Esophagus squamous epithelium (tissue), 5 donors: ENCODE measurements at regions of chr22 and their contacts with region 1.

Region 1: DNA sequence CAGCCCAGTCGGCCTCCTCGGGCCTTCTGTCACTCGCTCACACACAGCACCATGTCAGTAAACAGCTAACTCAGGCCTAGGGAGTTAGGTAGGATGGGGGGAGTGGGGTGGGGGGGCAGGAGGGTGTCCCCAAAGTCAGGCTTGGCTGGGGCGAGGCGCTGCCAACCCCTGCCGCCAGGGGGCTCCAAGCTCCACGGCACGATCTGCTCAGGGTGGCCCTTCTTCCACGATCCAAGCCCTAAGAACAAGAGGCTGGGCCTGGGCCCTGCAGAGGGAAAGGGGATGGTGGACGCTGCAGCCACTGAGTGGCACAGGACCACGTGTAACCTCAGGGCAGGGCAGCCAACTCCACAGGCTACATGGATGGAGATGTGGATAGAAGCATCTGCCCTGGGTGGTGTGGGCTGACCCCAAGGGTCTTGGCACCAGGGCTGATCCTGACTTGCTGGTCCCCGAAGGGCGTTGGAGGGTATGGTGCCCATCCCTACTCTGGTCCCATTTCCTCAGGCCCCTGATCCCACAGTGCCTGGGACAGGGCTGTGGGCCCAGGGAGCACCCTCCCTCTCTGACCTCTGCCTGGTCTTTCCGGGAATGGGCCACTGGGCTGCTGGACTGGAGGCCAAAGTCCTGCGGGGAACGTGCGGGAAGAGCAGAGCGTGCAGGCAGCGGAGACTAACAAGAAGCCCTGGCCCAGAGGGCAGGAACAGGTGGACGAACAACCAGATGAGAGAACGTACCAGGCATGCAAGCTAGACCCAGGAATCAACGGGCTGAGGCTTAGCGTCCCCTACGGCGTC is 29.1 kb upstream of the TXNRD2 start:
- DNase-seq: no peak
- H3K4me3 ChIP-seq: no peak overlapping the region
- H3K27ac ChIP-seq: no peak overlapping the region
- H3K4me1 ChIP-seq: peaks cover 0 to 38% (median 3%) of the 10 kb centered on the region in 3 donors
- H3K27me3 ChIP-seq: no peaks in the 10 kb centered on the region
- CTCF ChIP-seq: peak; percentile 85 to 98 (median 87)
- POLR2A ChIP-seq: no peak

Region 2: GRCh38 chr22:20116951-20117645 is 146.4 kb after region 1 on chr22 and contains the start of gene TRMT2A:
- intact Hi-C with region 1: loop called (anchors 10 kb)
- DNase-seq: peak; percentile 93
- H3K4me3 ChIP-seq: peak within 1 kb of the TSS; percentile 77 to 90 (median 85)
- H3K27ac ChIP-seq: peak within 1 kb of the TSS; percentile 89 to 93 (median 92)
- H3K4me1 ChIP-seq: peaks cover 30 to 77% (median 30%) of the 10 kb centered on the region in 3 donors
- H3K27me3 ChIP-seq: no peaks in the 10 kb centered on the region
- CTCF ChIP-seq: peak in 2 of 6 experiments; percentile 17 to 53
- POLR2A ChIP-seq: peak in 3 of 4 donors; percentile 39 to 66 (median 60)
- total RNA-seq, gene TRMT2A: 30.9 to 58.6 (median 41.3) TPM